PC-3 (cell line): ENCODE measurements at regions of chr6 and their contacts with region 1.

Region 1: DNA sequence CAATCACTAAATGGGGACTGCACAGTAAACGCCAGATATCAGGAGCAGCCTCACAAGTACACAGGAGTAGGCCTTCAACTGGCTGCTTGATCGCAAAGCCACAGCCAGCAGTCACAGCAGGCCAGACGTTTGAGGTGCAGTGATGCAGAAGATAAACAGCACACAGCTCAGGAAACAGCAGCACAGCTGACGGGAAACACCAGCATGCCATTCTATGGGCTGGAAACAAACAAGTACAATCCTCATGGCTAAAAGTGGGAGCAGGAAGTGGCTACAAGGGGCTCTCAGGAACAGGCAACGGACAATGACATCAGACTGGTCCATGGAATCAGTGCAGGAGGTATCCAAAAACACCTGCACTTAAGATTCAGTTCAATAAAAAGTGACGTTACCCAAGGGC is 111.0 kb downstream of the DTNBP1 start:
- DNase-seq: no peak
- ATAC-seq: no peak
- H3K4me3 ChIP-seq: no peak overlapping the region
- H3K27ac ChIP-seq: no peak overlapping the region
- H3K4me1 ChIP-seq: no peaks in the 10 kb centered on the region
- H3K27me3 ChIP-seq: no peaks in the 10 kb centered on the region
- CTCF ChIP-seq: no peak

Region 2: DNA sequence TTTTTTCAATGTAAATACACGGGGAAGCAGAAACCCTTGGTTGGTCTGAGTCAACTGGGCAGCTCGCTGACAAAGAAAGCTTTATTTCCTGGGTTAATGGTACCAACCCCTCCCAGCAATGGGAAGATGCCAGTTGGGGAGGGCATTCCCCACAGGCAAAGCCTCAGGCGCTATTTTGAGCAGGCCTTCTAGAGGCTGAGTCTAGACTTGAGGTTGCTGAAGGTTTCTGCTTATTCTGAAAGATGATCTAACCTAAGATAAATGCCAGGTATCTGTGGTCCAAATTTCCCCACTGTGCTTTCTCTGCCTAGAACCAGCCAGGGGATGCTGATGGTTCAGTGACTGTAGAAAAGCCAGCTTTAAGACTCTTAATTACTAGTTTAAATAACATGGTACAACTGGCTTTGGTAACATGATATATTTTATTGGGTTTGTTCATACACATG is 478.4 kb before region 1 on chr6:
- CTCF ChIA-PET with region 1: no interaction called
- POLR2A ChIA-PET with region 1: interaction called, 18 read pairs
- intact Hi-C with region 1: no loop called
- DNase-seq: peak; percentile 92
- ATAC-seq: peak; percentile 85
- H3K4me3 ChIP-seq: no peak overlapping the region
- H3K27ac ChIP-seq: peak overlapping the region; percentile 83
- H3K4me1 ChIP-seq: peaks cover 17% of the 10 kb centered on the region
- H3K27me3 ChIP-seq: no peaks in the 10 kb centered on the region
- CTCF ChIP-seq: no peak